Activated T-helper 1 cell treated with anti-CD3 and anti-CD28 coated beads, Interleukin-12 subunit alpha, Interleukin-12 subunit beta, Interleukin-2, Interleukin-4 antibody, amounts not matched to agents 30 ng/mL and 10 ng/mL and 1 ng/mL, durations not matched to agents 14 hours and 24 hours and 36 hours (primary cell): ENCODE measurements at regions of chr3 and their contacts with region 1.

Region 1: GRCh38 chr3:51941798-51942602 is at the starts of genes PARP3 and RRP9:
- DNase-seq: peak; percentile 100
- H3K4me3 Mint-ChIP-seq: peak within 1 kb of the TSS; percentile 89
- H3K27ac Mint-ChIP-seq: peak within 1 kb of the TSS; percentile 84
- H3K4me1 Mint-ChIP-seq: peaks cover 42% of the 10 kb centered on the region
- H3K27me3 Mint-ChIP-seq: no peaks in the 10 kb centered on the region
- total RNA-seq, gene PARP3: 13.4 and 14.5 TPM in 2 replicates
- total RNA-seq, gene RRP9: 91.8 and 93.1 TPM in 2 replicates

Region 2: DNA sequence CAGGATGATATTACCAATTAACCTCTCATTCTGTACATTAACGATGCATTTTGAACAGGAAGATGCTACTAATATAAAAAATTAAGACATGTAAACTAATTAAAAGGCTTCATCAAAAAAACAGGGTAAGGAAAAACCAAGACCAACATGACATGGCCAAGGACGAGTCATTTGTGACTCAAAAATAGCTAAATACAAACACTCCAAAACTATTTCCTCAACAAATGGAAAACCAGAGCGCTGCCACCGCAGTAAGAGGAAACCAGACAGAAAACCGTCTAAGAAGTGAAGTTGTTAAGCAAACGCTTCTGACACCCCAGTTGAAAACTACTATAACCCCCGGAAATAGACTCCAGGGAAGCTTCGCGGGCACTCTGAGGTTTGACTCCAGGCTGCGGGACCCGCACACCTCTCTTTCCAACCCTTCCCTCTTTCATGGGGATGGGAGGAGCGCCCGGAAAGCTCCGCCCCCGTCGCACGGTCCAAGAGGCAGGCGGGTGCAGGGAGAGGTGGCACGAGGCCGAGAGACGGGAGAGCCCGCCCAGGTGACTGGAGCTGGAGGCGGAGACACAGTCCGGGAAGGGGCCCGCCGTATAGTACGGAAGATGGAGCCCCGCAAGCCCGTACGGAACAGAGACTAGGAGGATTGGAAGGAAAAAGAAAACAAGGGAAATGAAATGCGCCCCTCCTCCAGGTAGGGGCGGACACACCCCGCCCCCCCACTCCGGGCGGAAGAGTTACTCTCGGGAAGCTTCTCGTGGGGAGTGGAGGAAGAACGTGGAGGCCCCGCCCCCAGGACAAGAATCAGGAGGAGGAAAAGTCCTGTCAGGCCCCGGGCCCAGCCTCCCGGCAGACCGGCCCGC is 442.9 kb before region 1 on chr3:
- intact Hi-C with region 1: loop called (anchors 1 kb)
- DNase-seq: peak; percentile 85
- H3K4me3 Mint-ChIP-seq: peak overlapping the region; percentile 88
- H3K27ac Mint-ChIP-seq: peak overlapping the region; percentile 95
- H3K4me1 Mint-ChIP-seq: peaks cover 21% of the 10 kb centered on the region
- H3K27me3 Mint-ChIP-seq: peaks cover 3% of the 10 kb centered on the region

Region 3: DNA sequence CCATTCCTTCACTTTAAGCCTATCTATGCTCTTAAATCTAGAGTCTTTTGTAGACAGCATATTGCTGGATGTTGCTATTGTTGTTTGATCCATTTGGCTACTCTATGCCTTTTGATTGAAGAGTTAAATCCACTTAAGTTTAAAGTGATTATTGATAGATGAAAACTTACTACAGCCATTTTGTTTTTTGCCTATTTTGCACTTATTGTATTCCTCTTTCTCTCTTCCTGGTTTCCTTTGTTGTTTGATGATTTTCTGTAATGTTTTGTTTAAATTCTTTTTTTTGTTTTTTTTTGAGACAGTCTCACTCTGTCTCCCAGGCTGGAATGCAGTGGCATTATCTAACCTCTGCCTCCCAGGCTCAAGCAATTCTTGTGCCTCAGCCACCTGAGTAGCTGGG is 182.8 kb before region 1 on chr3:
- intact Hi-C with region 1: no loop called
- DNase-seq: no peak
- H3K4me3 Mint-ChIP-seq: no peak overlapping the region
- H3K27ac Mint-ChIP-seq: no peak overlapping the region
- H3K4me1 Mint-ChIP-seq: peaks cover 4% of the 10 kb centered on the region
- H3K27me3 Mint-ChIP-seq: peaks cover 11% of the 10 kb centered on the region

Region 4: DNA sequence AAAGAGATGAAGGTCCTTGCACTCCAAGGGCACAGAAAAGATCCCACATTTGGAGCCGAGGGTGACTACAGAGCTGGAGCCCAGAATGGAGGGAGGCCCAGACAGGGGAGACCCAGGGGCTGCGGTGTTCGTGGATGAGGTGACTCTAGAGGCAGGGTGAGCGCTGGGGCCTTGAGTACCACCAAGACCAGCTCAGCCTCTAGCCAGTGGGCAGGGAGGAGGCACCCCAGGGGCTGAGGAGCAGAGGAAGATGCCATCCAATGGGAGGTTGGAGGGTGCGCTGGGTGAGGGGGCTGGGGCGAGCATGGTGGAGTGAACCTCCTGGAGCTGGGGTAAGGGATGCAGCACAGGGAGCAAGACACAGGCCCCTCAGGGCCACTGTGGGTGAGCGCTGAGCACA is 13.6 kb before region 1 on chr3:
- intact Hi-C with region 1: no loop called
- DNase-seq: no peak
- H3K4me3 Mint-ChIP-seq: no peak overlapping the region
- H3K27ac Mint-ChIP-seq: no peak overlapping the region
- H3K4me1 Mint-ChIP-seq: no peaks in the 10 kb centered on the region
- H3K27me3 Mint-ChIP-seq: no peaks in the 10 kb centered on the region

Region 5: DNA sequence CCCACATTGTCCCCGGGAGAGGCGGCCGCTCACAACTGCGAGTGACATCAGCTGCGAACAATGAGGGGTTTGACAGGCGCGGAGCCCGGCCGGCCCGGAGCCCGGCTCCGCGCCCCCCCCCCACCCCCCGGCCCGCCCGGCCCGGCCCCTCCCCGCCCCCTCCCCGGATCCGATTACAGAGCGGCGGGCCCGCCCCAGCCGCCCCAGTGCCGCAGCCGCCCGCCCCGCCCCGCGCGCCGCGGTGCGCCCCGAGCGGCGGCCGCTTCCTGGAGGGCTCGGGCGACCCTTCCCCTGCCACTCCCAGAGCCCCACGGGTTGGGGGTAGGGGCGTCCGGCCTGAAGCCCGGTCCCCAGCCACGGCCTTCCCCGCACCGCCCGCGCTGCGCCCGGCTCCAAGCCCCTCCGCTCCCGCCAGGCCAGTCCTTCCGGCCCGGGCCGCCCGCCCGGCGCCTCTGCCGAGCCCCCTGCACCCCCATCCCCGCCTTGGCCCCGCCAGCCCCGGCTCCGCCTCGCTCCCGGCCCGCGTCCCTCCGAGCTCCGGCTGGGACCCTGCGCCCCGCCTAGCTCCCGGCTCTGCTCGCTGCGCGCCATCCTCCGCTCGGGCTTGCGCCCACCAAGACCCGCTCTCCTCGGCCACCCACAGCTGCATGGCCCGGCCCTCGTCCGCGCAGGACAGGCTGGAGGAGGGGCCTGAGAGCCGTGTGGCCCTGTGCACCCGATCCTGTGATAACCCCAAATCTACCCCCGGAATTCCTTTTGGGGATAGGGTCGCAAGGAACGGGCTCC is 25.6 kb after region 1 on chr3 and contains the start of gene PCBP4:
- intact Hi-C with region 1: loop called (anchors 1 kb)
- DNase-seq: peak; percentile 39
- H3K4me3 Mint-ChIP-seq: peak within 1 kb of the TSS; percentile 87
- H3K27ac Mint-ChIP-seq: peak within 1 kb of the TSS; percentile 81
- H3K4me1 Mint-ChIP-seq: peaks cover 6% of the 10 kb centered on the region
- H3K27me3 Mint-ChIP-seq: peaks cover 4% of the 10 kb centered on the region
- total RNA-seq, gene PCBP4: 14.8 and 18.0 TPM in 2 replicates

Region 6: GRCh38 chr3:51982782-51983577 is 41.0 kb after region 1 on chr3 and contains the start of gene ACY1:
- intact Hi-C with region 1: loop called (anchors 1 kb)
- DNase-seq: peak; percentile 79
- H3K4me3 Mint-ChIP-seq: peak within 1 kb of the TSS; percentile 97
- H3K27ac Mint-ChIP-seq: peak within 1 kb of the TSS; percentile 97
- H3K4me1 Mint-ChIP-seq: peaks cover 30% of the 10 kb centered on the region
- H3K27me3 Mint-ChIP-seq: no peaks in the 10 kb centered on the region
- total RNA-seq, gene ACY1: 58.0 and 58.5 TPM in 2 replicates

Region 7: DNA sequence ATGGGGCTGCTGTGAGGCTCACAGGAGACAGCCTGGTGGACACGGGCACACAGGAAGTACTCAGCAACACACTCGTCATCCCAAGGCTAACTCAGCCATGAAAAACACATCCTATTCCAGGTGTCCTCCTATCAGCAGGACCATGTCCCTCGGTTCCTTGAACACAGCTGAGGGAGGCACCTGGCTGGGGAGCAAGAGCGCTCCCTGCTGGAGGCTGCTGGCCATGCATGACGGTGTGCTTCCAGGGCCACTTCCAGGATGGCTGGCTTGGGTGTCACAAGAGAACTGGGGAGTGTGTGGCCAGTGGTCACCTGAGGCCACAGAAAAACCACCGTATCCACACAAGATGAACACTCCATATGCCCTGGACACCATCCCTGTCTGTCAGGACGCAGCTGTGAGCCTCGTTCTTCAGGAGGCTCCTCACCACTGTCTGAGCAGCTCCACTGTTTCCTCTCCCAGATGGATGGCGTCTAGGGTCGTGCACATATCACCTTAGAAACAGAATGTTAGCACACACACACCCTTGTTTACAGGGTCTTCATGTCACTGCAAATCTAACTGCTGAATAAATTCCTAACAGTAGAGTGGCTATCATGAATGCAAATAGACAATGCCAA is 181.2 kb after region 1 on chr3:
- intact Hi-C with region 1: loop called (anchors 1 kb)
- DNase-seq: peak; percentile 65
- H3K4me3 Mint-ChIP-seq: no peak overlapping the region
- H3K27ac Mint-ChIP-seq: no peak overlapping the region
- H3K4me1 Mint-ChIP-seq: peaks cover 34% of the 10 kb centered on the region
- H3K27me3 Mint-ChIP-seq: no peaks in the 10 kb centered on the region

Region 8: GRCh38 chr3:52154117-52155094 is 212.4 kb after region 1 on chr3 and contains the start of gene POC1A:
- intact Hi-C with region 1: loop called (anchors 1 kb)
- DNase-seq: peak; percentile 86
- H3K4me3 Mint-ChIP-seq: peak within 1 kb of the TSS; percentile 91
- H3K27ac Mint-ChIP-seq: peak within 1 kb of the TSS; percentile 95
- H3K4me1 Mint-ChIP-seq: peaks cover 25% of the 10 kb centered on the region
- H3K27me3 Mint-ChIP-seq: peaks cover 3% of the 10 kb centered on the region
- total RNA-seq, gene POC1A: 20.3 and 24.9 TPM in 2 replicates

Region 9: GRCh38 chr3:52444860-52445793 is 503.1 kb after region 1 on chr3 and contains the start of gene SEMA3G:
- intact Hi-C with region 1: no loop called
- DNase-seq: peak; percentile 70
- H3K4me3 Mint-ChIP-seq: no peak within 1 kb of the TSS
- H3K27ac Mint-ChIP-seq: no peak within 1 kb of the TSS
- H3K4me1 Mint-ChIP-seq: peaks cover 7% of the 10 kb centered on the region
- H3K27me3 Mint-ChIP-seq: no peaks in the 10 kb centered on the region
- total RNA-seq, gene SEMA3G: 0.13 TPM in 1 of 2 replicates, not detected in the other

Region 10: GRCh38 chr3:53347261-53348064 is 1405.5 kb after region 1 on chr3 and contains the start of gene DCP1A:
- intact Hi-C with region 1: loop called (anchors 5 kb)
- DNase-seq: peak; percentile 96
- H3K4me3 Mint-ChIP-seq: peak within 1 kb of the TSS; percentile 98
- H3K27ac Mint-ChIP-seq: peak within 1 kb of the TSS; percentile 98
- H3K4me1 Mint-ChIP-seq: peaks cover 37% of the 10 kb centered on the region
- H3K27me3 Mint-ChIP-seq: no peaks in the 10 kb centered on the region
- total RNA-seq, gene DCP1A: 46.3 and 48.6 TPM in 2 replicates